ENCODE measurements at regions of chr12 and their contacts with region 1.

Region 1: DNA sequence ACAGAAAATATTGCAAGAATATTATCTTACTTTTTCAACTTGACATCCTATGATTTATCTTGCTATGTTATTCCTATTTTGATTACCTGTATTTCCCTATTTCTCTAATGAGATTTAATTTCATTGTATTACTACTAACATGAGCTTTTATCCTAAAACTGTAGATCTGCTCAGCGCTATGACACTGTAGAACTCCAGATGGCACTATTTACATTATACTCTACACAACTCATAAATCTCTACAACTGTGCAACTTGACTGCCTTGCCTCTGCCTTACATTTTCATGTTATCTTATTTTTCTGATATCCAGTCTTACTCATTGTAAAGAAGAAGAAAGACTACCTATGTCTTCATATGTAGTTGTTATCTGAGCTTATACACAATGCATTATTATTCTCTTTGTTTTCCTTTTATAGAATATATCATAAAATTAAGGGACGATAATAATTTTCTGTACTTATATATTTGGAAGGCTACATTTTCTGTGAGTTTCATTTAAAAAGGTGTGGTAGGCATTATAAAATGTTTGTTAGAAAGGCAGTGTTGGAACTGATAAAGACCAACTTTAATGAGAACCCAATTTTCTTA is 24.1 kb downstream of the NUP37 start:
- DNase-seq: no peak
- ATAC-seq: peak; percentile 79
- H3K4me3 ChIP-seq: no peak overlapping the region
- H3K27ac ChIP-seq: no peak overlapping the region
- H3K4me1 ChIP-seq: no peaks in the 10 kb centered on the region
- H3K27me3 ChIP-seq: no peaks in the 10 kb centered on the region
- CTCF ChIP-seq: peak; percentile 31 to 65 (median 44); a peak in 5 of 6 replicates
- POLR2A ChIP-seq: no peak
- RAD21 ChIP-seq: peak; percentile 52

Region 2: DNA sequence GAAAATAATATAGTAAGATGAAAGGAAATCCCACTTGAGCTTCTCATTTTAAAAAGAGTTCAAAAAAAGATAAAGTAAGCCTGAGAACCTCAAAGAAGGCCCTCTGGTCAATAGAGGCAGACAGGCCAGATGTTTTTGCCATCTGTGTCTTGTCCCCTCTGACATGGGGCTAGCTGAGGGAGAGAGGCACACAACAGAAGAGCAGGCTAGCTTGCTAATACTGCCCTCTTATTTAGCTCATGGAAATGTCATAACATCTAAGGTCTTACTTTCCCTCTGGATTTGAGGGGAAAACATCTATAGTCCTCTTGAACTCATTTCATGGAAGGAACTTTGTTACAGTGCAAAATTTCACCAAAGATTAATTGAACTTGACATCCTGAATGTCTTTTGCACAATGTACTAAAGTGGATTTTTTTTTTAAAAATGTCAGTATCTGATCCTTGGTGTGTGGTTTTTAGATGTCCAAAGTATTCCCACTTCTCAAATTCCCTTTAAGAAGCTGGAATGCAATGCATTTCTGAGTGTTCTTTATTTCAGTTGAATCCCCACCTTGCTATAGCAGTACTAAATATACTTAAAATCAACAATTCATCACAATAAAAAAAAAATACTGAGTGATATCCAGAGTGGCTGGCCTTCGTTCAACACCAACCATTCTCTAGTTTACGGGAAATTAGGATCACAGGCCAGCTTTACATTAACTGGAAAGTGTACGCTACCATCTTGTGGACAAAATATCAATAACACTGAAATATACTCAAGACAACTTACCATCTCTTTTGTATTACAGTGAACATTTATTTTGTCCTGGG is 644.6 kb after region 1 on chr12:
- CTCF ChIA-PET with region 1: interaction called, 3 read pairs
- POLR2A ChIA-PET with region 1: no interaction called
- RAD21 ChIA-PET with region 1: no interaction called
- intact Hi-C with region 1: loop called (anchors 10 kb)
- DNase-seq: peak; percentile 13
- ATAC-seq: peak; percentile 52
- H3K4me3 ChIP-seq: no peak overlapping the region
- H3K27ac ChIP-seq: no peak overlapping the region
- H3K4me1 ChIP-seq: no peaks in the 10 kb centered on the region
- H3K27me3 ChIP-seq: 0 out of 2 replicates have a peak, but pooled peaks cover 4% of the 10 kb centered on the region
- CTCF ChIP-seq: peak; percentile 6 to 44 (median 37); a peak in 4 of 6 replicates
- POLR2A ChIP-seq: no peak
- RAD21 ChIP-seq: peak; percentile 53

Region 3: DNA sequence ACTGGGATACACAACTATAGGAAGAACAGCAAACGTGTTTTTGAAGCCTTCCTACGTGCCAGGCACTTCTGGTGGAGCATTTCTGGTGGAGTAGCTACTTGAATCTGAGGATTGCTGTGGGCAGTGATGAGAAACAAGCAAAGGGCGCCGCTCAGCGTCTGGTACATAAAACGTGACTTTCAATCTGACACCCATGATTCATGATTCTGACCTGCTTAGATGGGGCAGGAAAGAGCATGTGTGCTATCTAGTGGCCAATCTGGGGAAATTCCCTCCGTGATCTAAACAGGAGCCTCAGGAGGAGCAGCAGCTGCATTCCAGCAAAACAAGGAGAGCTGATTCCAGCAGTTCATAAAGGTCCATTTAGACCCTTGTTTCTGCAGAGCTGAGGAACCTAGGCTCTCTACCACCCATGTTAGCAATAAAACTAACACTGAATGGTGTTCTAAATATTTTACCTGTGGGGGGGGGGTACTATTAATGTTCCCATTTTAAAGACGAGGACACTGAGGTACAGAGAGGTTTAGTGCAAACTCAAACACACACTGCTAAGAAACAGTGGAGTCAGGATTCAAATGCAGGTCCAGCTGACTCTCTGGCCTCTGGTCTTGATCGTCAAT is 783.5 kb after region 1 on chr12:
- CTCF ChIA-PET with region 1: no interaction called
- POLR2A ChIA-PET with region 1: no interaction called
- RAD21 ChIA-PET with region 1: no interaction called
- intact Hi-C with region 1: loop called (anchors 5 kb)
- DNase-seq: peak; percentile 76
- ATAC-seq: peak; percentile 88
- H3K4me3 ChIP-seq: no peak overlapping the region
- H3K27ac ChIP-seq: no peak overlapping the region
- H3K4me1 ChIP-seq: 0 out of 4 replicates have a peak, but pooled peaks cover 0 to 3% of the 10 kb centered on the region in 2 experiments
- H3K27me3 ChIP-seq: peaks cover 13% of the 10 kb centered on the region; the same call in 1 of the 2 replicates
- CTCF ChIP-seq: peak; percentile 54 to 95 (median 62)
- POLR2A ChIP-seq: no peak
- RAD21 ChIP-seq: peak; percentile 85

Measured in HCT116 (cell line).